ENCODE measurements at regions of chr3 and their contacts with region 1.

Region 1: GRCh38 chr3:130892759-130893375 is 1.0 kb upstream of the ATP2C1 start:
- DNase-seq: peak; percentile 59
- H3K4me3 Mint-ChIP-seq: peak overlapping the region; percentile 92
- H3K27ac Mint-ChIP-seq: peak overlapping the region; percentile 96
- H3K4me1 Mint-ChIP-seq: peaks cover 48% of the 10 kb centered on the region
- H3K27me3 Mint-ChIP-seq: no peaks in the 10 kb centered on the region

Region 2: GRCh38 chr3:129183569-129184395 is 1709.1 kb before region 1 on chr3 and contains the start of gene CNBP:
- intact Hi-C with region 1: loop called (anchors 5 kb)
- DNase-seq: peak; percentile 91
- H3K4me3 Mint-ChIP-seq: peak within 1 kb of the TSS; percentile 97
- H3K27ac Mint-ChIP-seq: peak within 1 kb of the TSS; percentile 98
- H3K4me1 Mint-ChIP-seq: peaks cover 35% of the 10 kb centered on the region
- H3K27me3 Mint-ChIP-seq: no peaks in the 10 kb centered on the region
- total RNA-seq, gene CNBP: 408 and 425 TPM in 2 replicates

Region 3: GRCh38 chr3:130111185-130111864 is 781.5 kb before region 1 on chr3:
- intact Hi-C with region 1: loop called (anchors 5 kb)
- DNase-seq: peak; percentile 98
- H3K4me3 Mint-ChIP-seq: peak overlapping the region; percentile 96
- H3K27ac Mint-ChIP-seq: peak overlapping the region; percentile 97
- H3K4me1 Mint-ChIP-seq: peaks cover 20% of the 10 kb centered on the region
- H3K27me3 Mint-ChIP-seq: peaks cover 6% of the 10 kb centered on the region

Region 4: GRCh38 chr3:130529513-130530215 is 363.2 kb before region 1 on chr3:
- intact Hi-C with region 1: no loop called
- DNase-seq: no peak
- H3K4me3 Mint-ChIP-seq: no peak overlapping the region
- H3K27ac Mint-ChIP-seq: no peak overlapping the region
- H3K4me1 Mint-ChIP-seq: peaks cover 6% of the 10 kb centered on the region
- H3K27me3 Mint-ChIP-seq: peaks cover 7% of the 10 kb centered on the region

Region 5: DNA sequence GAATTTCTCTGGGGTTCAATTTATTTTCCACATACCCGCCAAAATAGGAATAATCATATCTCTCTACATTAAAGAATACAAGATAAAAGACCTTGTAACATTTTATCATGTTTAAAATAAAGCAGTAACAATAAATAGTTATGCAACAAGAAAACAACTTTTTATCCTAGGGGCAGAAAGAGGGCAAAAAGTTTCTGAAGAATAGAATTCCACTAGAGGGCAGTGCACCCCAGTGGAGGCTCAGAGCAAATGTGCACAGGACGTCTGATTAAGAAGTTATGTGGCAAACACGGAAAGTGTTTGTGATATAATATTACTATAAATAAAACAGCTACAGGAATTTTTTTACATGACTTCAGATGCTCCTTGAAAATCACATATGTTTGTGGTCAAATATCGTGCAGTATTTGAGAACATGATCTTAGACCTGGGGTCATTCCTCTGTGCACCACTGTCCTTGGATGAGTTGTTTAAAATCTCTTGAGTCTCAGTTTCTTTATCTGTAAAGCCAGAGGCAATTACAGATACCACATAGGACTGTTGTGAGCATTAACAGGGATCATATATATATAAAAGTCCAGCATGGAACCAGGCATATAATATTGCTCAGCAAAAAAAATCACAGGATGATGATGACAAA is 133.0 kb before region 1 on chr3:
- intact Hi-C with region 1: loop called (anchors 1 kb)
- DNase-seq: peak; percentile 43
- H3K4me3 Mint-ChIP-seq: no peak overlapping the region
- H3K27ac Mint-ChIP-seq: no peak overlapping the region
- H3K4me1 Mint-ChIP-seq: peaks cover 29% of the 10 kb centered on the region
- H3K27me3 Mint-ChIP-seq: peaks cover 7% of the 10 kb centered on the region

Region 6: GRCh38 chr3:130905551-130905950 is 12.7 kb after region 1 on chr3:
- intact Hi-C with region 1: loop called (anchors 1 kb)
- DNase-seq: no peak
- H3K4me3 Mint-ChIP-seq: no peak overlapping the region
- H3K27ac Mint-ChIP-seq: peak overlapping the region; percentile 51
- H3K4me1 Mint-ChIP-seq: peaks cover 65% of the 10 kb centered on the region
- H3K27me3 Mint-ChIP-seq: no peaks in the 10 kb centered on the region

Region 7: DNA sequence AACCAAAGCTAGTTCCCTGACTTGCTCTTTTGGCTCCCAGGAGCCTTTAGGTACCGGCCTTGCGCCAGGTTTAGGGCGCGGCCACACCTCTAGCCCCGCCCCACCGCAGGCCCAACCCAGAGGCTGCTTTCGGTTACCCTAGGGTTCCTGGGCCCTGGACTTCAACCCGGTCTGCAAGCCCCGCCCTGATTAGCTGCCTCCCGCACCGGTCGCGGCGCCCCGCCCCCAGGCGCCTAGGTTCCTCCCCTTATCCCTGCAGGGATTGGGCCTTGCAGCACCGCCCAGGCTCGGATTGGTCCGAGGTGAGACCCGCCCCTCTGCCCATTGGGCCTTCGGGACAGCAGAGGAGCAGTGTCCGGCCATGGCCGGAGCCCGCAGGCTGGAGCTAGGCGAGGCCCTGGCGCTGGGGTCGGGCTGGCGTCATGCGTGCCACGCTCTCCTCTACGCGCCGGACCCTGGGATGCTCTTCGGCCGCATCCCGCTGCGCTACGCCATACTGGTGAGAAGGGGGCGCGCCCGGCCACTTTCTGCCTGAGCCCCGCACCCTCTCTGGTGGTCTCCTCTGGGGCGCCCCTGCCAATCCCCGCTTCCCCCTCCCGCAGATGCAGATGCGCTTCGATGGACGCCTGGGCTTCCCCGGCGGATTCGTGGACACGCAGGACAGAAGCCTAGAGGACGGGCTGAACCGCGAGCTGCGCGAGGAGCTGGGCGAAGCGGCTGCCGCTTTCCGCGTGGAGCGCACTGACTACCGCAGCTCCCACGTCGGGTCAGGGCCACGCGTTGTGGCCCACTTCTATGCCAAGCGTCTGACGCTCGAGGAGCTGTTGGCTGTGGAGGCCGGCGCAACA is 488.8 kb after region 1 on chr3 and contains the start of gene NUDT16:
- intact Hi-C with region 1: loop called (anchors 1 kb)
- DNase-seq: peak; percentile 98
- H3K4me3 Mint-ChIP-seq: peak within 1 kb of the TSS; percentile 92
- H3K27ac Mint-ChIP-seq: peak within 1 kb of the TSS; percentile 90
- H3K4me1 Mint-ChIP-seq: peaks cover 52% of the 10 kb centered on the region
- H3K27me3 Mint-ChIP-seq: no peaks in the 10 kb centered on the region
- total RNA-seq, gene NUDT16: 10.6 and 11.5 TPM in 2 replicates

Region 8: DNA sequence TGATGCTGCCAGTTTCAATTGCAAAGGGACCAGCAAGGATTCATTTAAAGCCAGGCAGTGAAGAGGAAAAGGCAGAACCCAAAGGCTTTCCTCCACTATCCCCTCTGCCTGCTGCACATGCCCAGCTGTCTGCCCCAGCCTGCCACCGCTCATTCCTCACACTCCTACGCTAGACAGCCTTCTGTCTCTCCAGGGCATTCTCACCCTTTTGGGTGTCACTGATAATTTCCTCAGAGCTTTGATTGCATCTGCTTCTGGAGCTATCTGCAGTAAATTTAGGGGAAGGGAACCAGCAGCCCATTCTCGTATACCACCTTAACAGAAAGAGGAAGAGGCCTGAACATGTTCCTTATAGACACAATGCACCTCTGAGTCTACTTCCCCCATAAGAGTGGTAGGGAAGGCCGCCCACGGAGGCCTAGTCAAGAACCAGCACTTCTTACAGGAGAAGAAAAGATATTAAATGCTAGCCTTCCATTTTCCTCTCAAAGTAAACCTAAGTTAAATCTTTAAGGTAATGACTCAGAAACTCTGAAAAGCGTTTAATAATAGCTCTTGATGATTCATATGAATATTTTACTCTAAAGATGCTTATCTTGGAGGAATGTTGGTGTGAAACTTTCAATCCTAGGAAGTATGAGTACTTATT is 509.6 kb after region 1 on chr3:
- intact Hi-C with region 1: no loop called
- DNase-seq: no peak
- H3K4me3 Mint-ChIP-seq: no peak overlapping the region
- H3K27ac Mint-ChIP-seq: no peak overlapping the region
- H3K4me1 Mint-ChIP-seq: no peaks in the 10 kb centered on the region
- H3K27me3 Mint-ChIP-seq: no peaks in the 10 kb centered on the region